MCF 10A (cell line): ENCODE measurements at regions of chr1 and their contacts with region 1.

Region 1: GRCh38 chr1:226308723-226309315 is at the start of gene LIN9:
- DNase-seq: peak; percentile 98
- H3K4me3 Mint-ChIP-seq: peak within 1 kb of the TSS; percentile 84
- H3K27ac Mint-ChIP-seq: peak within 1 kb of the TSS; percentile 82
- H3K4me1 Mint-ChIP-seq: peaks cover 34% of the 10 kb centered on the region
- H3K27me3 Mint-ChIP-seq: no peaks in the 10 kb centered on the region
- CTCF ChIP-seq: no peak
- total RNA-seq, gene LIN9: 10.3 and 10.4 TPM in 2 replicates

Region 2: DNA sequence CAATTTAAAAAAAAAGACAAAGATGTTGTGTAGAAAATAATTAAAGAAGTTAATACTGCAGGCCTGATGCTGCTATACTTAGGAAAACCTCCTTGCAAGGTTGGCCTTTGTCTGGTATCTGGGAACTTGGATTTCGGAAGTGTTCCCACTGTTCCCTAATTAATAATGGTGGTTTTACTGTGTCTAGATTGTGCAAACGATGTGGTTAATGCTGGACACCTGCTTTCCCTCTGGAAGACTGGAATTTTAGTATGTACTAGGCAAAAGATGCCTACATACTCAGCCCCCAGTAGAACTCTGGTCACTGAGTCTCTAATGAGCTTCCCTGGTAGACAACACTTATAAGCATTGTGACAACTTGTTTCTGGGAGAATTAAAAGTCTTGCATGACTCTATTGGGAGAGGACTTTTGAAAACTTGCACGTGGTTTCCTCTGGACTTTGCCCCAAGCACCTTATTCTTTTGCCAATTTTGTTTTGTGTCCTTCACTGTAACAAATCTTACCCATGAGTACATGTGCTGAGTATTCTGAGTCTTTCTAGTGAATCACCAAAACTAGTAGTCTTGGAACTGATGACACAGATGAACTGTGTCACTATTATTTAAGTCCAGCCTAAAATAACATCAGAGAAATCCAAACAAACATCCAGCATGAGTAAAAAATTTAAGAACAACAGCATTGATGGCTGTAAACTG is 40.2 kb before region 1 on chr1:
- CTCF ChIA-PET with region 1: interaction called, 5 read pairs
- POLR2A ChIA-PET with region 1: interaction called, 28 read pairs
- intact Hi-C with region 1: no loop called
- DNase-seq: peak; percentile 83
- H3K4me3 Mint-ChIP-seq: no peak overlapping the region
- H3K27ac Mint-ChIP-seq: peak overlapping the region; percentile 65
- H3K4me1 Mint-ChIP-seq: peaks cover 26% of the 10 kb centered on the region
- H3K27me3 Mint-ChIP-seq: no peaks in the 10 kb centered on the region
- CTCF ChIP-seq: no peak

Region 3: GRCh38 chr1:226293553-226293920 is 15.3 kb before region 1 on chr1:
- CTCF ChIA-PET with region 1: interaction called, 7 read pairs
- POLR2A ChIA-PET with region 1: interaction called, 15 read pairs
- intact Hi-C with region 1: no loop called
- DNase-seq: peak; percentile 35
- H3K4me3 Mint-ChIP-seq: no peak overlapping the region
- H3K27ac Mint-ChIP-seq: peak overlapping the region; percentile 27
- H3K4me1 Mint-ChIP-seq: peaks cover 11% of the 10 kb centered on the region
- H3K27me3 Mint-ChIP-seq: no peaks in the 10 kb centered on the region
- CTCF ChIP-seq: no peak